Activated CD4-positive, alpha-beta memory T cell treated with anti-CD3 and anti-CD28 coated beads for 36 hours (primary cell): ENCODE measurements at regions of chr22 and their contacts with region 1.

Region 1: GRCh38 chr22:23385291-23386244 is 194.5 kb downstream of the IGLL1 start:
- DNase-seq: peak; percentile 88
- H3K4me3 Mint-ChIP-seq: no peak overlapping the region
- H3K27ac Mint-ChIP-seq: no peak overlapping the region
- H3K4me1 Mint-ChIP-seq: no peaks in the 10 kb centered on the region
- H3K27me3 Mint-ChIP-seq: peaks cover 2% of the 10 kb centered on the region

Region 2: GRCh38 chr22:23248583-23248982 is 137.0 kb before region 1 on chr22:
- CTCF ChIA-PET with region 1: no interaction called
- POLR2A ChIA-PET with region 1: no interaction called
- intact Hi-C with region 1: no loop called
- DNase-seq: no peak
- H3K4me3 Mint-ChIP-seq: no peak overlapping the region
- H3K27ac Mint-ChIP-seq: peak overlapping the region; percentile 18
- H3K4me1 Mint-ChIP-seq: peaks cover 74% of the 10 kb centered on the region
- H3K27me3 Mint-ChIP-seq: no peaks in the 10 kb centered on the region

Region 3: GRCh38 chr22:23289851-23290724 is 95.5 kb before region 1 on chr22:
- CTCF ChIA-PET with region 1: interaction called, 20 read pairs
- POLR2A ChIA-PET with region 1: no interaction called
- intact Hi-C with region 1: no loop called
- DNase-seq: peak; percentile 70
- H3K4me3 Mint-ChIP-seq: no peak overlapping the region
- H3K27ac Mint-ChIP-seq: no peak overlapping the region
- H3K4me1 Mint-ChIP-seq: no peaks in the 10 kb centered on the region
- H3K27me3 Mint-ChIP-seq: no peaks in the 10 kb centered on the region

Region 4: GRCh38 chr22:23315341-23315917 is 70.1 kb before region 1 on chr22:
- CTCF ChIA-PET with region 1: interaction called, 10 read pairs
- POLR2A ChIA-PET with region 1: no interaction called
- intact Hi-C with region 1: loop called (anchors 1 kb)
- DNase-seq: peak; percentile 70
- H3K4me3 Mint-ChIP-seq: no peak overlapping the region
- H3K27ac Mint-ChIP-seq: no peak overlapping the region
- H3K4me1 Mint-ChIP-seq: peaks cover 4% of the 10 kb centered on the region
- H3K27me3 Mint-ChIP-seq: no peaks in the 10 kb centered on the region

Region 5: DNA sequence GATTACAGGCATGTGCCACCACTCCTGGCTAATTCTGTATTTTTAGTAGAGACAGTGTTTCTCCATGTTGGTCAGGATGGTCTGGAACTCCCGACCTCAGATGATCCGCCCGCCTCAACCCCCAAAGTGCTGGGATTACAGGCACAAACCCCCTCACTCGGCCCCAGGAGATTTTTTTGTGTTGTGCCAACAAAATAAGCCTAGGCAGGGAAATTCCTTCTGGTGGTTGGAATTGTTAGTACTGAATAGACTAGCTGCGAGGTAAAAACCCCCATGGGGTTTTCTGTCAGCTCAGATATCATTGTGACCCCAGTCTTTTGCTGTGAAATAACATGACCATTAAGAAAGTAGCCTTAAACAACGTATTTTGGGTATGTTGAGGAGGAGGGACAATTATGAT is 60.4 kb before region 1 on chr22:
- CTCF ChIA-PET with region 1: interaction called, 10 read pairs
- POLR2A ChIA-PET with region 1: no interaction called
- intact Hi-C with region 1: no loop called
- DNase-seq: no peak
- H3K4me3 Mint-ChIP-seq: no peak overlapping the region
- H3K27ac Mint-ChIP-seq: no peak overlapping the region
- H3K4me1 Mint-ChIP-seq: peaks cover 10% of the 10 kb centered on the region
- H3K27me3 Mint-ChIP-seq: peaks cover 4% of the 10 kb centered on the region

Region 6: GRCh38 chr22:23365961-23366360 is 19.6 kb before region 1 on chr22:
- CTCF ChIA-PET with region 1: interaction called, 12 read pairs
- POLR2A ChIA-PET with region 1: no interaction called
- intact Hi-C with region 1: no loop called
- DNase-seq: no peak
- H3K4me3 Mint-ChIP-seq: no peak overlapping the region
- H3K27ac Mint-ChIP-seq: no peak overlapping the region
- H3K4me1 Mint-ChIP-seq: no peaks in the 10 kb centered on the region
- H3K27me3 Mint-ChIP-seq: peaks cover 27% of the 10 kb centered on the region

Region 7: GRCh38 chr22:23467721-23468296 is 82.2 kb after region 1 on chr22:
- CTCF ChIA-PET with region 1: no interaction called
- POLR2A ChIA-PET with region 1: no interaction called
- intact Hi-C with region 1: no loop called
- DNase-seq: no peak
- H3K4me3 Mint-ChIP-seq: no peak overlapping the region
- H3K27ac Mint-ChIP-seq: no peak overlapping the region
- H3K4me1 Mint-ChIP-seq: no peaks in the 10 kb centered on the region
- H3K27me3 Mint-ChIP-seq: no peaks in the 10 kb centered on the region